Body of pancreas (tissue), 4 donors: ENCODE measurements at regions of chr1 and their contacts with region 1.

Region 1: DNA sequence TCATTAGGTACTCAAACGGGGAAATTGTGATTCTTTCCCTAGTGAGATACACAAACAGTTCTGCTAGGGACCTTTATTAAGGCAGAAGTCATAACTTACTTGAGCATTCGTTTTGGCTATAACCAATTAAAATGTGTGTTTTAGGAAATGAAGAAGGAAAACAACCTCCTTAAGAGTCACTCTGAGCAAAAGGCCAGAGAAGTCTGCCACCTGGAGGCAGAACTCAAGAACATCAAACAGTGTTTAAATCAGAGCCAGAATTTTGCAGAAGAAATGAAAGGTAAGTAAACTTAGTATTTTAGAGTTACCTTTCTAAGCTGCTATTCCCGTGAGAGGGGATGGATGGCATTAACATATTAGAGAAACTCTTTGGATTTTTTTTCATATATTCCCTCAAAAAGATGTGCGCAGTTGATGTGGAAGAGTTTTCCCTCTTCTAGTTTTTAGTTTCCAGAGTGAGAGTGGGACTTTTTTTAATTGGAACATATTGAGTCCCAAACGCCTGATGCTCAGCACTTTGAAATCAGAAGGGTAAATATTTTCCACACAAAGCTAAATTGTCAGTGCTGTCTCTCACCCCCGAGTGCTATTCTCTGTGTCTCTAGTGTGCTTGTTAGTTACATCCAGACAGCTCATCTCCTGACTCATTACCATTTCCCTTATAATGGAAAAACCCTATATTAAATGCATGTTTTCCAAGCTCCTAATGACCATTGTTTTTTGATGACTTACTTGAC is 34.9 kb downstream of the CENPF start:
- DNase-seq: peak; percentile 8 to 27 (median 18)
- ATAC-seq: no peak
- H3K4me3 ChIP-seq: no peak overlapping the region
- H3K27ac ChIP-seq: no peak overlapping the region
- H3K4me1 ChIP-seq: no peaks in the 10 kb centered on the region
- H3K27me3 ChIP-seq: no peaks in the 10 kb centered on the region
- CTCF ChIP-seq: peak; percentile 51 to 64 (median 58)
- POLR2A ChIP-seq: no peak

Region 2: DNA sequence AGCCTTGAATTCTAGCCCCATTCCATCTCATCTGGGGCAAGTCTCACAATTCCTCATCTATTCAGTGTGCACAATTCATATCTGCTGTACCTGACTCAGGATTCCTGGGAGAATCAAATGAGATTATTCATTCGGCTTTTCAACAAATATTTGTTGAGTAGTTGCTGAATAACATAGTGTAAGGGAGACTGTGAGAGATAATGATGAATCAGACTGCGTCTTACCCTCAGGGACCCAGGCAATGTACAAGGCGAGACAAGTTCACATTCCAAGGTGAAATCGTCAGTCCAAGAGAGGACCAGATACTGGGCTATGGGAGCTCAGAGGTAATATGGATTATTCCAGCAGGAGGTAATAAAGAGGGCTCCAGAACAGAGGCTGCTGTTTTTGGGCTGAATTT is 424.8 kb before region 1 on chr1:
- intact Hi-C with region 1: loop called (anchors 10 kb)
- DNase-seq: no peak
- ATAC-seq: no peak
- H3K4me3 ChIP-seq: no peak overlapping the region
- H3K27ac ChIP-seq: no peak overlapping the region
- H3K4me1 ChIP-seq: peaks cover 31% of the 10 kb centered on the region
- H3K27me3 ChIP-seq: no peaks in the 10 kb centered on the region
- CTCF ChIP-seq: no peak
- POLR2A ChIP-seq: no peak